HEK293T (cell line): ENCODE measurements at regions of chr2 and their contacts with region 1.

Region 1: GRCh38 chr2:38602732-38603401 is at the start of gene HNRNPLL:
- DNase-seq: peak; percentile 95

Region 2: GRCh38 chr2:38581193-38582147 is 21.4 kb before region 1 on chr2:
- CTCF ChIA-PET with region 1: interaction called, 9 read pairs
- POLR2A ChIA-PET with region 1: interaction called, 11 read pairs
- DNase-seq: peak; percentile 59

Region 3: GRCh38 chr2:38590053-38590452 is 12.8 kb before region 1 on chr2:
- CTCF ChIA-PET with region 1: interaction called, 3 read pairs
- POLR2A ChIA-PET with region 1: interaction called, 10 read pairs
- DNase-seq: no peak

Region 4: GRCh38 chr2:38613126-38613848 is 10.4 kb after region 1 on chr2:
- CTCF ChIA-PET with region 1: interaction called, 10 read pairs
- POLR2A ChIA-PET with region 1: interaction called, 3 read pairs
- DNase-seq: no peak

Region 5: GRCh38 chr2:38665854-38666555 is 63.1 kb after region 1 on chr2 and contains the start of gene GALM:
- CTCF ChIA-PET with region 1: interaction called, 3 read pairs
- POLR2A ChIA-PET with region 1: interaction called, 20 read pairs
- DNase-seq: peak; percentile 90

Region 6: GRCh38 chr2:38850045-38850444 is 247.2 kb after region 1 on chr2:
- CTCF ChIA-PET with region 1: no interaction called
- POLR2A ChIA-PET with region 1: no interaction called
- DNase-seq: no peak